Left ventricle myocardium inferior (tissue), 1 donor: ENCODE measurements at regions of chr16 and their contacts with region 1.

Region 1: DNA sequence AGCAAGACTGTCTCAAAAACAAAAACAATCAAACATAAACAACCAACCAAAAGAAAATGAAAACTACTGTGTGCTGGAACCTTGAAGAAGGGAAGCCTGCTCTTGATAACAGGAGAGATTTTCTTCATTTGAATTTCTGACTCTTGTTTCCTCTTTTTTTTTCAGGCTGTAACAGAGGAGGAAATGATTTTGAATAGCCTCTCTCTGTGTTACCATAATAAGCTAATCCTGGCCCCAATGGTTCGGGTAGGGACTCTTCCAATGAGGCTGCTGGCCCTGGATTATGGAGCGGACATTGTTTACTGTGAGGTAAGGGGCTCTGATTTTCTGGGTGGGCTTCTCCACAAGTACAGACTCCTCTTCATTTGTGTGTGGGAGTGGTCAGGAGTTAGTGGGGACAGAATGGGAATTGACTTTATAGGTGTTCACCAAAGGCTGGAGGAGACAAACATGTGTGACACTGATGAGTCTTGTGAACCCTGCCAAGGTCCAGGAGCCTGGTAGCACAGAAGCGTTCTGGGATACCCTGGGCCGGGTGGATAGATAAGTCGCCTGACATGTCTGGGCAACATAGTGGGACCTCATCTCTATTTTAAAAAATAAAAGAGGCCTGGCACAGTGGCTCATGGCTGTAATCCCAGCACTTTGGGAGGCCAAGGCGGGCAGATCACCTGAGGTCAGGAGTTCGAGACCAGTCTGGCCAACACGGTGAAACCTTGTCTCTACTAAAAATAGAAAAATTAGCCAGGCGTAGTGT is 14.9 kb downstream of the DUS2 start:
- DNase-seq: no peak
- H3K4me3 ChIP-seq: no peak overlapping the region
- H3K27ac ChIP-seq: peak overlapping the region; percentile 22
- H3K4me1 ChIP-seq: no peaks in the 10 kb centered on the region
- H3K27me3 ChIP-seq: no peaks in the 10 kb centered on the region
- CTCF ChIP-seq: no peak

Region 2: DNA sequence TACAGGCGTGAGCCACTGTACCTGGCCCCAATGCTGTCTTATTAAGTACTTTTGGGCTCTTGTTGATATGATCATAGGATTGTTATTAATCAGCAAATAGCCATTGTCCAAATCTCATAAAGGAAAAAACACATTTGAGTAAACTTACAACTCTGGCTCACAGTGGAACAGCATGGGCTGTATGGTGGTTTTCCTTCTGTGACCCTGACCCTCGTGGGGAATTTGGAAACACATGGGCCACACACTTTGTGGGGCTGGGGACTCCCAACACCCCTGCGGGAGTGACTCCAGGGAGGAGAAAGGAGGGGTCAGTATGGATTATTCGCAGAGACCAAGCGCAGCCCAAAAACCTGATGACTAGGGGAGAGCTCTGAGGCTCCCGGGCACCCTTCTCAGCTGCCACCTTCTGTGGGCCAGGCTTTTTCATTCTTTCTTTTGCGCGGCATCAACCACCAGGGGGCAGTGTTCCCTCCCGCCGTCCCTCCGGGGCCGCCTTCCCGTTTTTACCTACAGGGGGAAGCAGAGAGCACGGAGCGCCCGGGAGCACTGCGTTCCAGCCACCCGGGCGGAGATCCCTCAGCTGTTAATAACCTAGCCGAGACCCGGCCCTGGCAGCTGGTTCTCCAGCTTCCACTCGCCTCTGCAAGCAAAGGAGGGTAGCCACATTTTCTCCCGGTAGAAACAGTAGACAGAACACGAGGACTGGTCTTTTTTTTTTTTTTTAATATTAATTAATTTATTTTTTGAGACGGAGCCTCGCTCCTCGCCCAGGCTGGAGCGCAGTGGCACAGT is 221.6 kb before region 1 on chr16:
- intact Hi-C with region 1: loop called (anchors 5 kb)
- DNase-seq: peak; percentile 84
- H3K4me3 ChIP-seq: no peak overlapping the region
- H3K27ac ChIP-seq: peak overlapping the region; percentile 50
- H3K4me1 ChIP-seq: peaks cover 4% of the 10 kb centered on the region
- H3K27me3 ChIP-seq: no peaks in the 10 kb centered on the region
- CTCF ChIP-seq: peak; percentile 100

Region 3: DNA sequence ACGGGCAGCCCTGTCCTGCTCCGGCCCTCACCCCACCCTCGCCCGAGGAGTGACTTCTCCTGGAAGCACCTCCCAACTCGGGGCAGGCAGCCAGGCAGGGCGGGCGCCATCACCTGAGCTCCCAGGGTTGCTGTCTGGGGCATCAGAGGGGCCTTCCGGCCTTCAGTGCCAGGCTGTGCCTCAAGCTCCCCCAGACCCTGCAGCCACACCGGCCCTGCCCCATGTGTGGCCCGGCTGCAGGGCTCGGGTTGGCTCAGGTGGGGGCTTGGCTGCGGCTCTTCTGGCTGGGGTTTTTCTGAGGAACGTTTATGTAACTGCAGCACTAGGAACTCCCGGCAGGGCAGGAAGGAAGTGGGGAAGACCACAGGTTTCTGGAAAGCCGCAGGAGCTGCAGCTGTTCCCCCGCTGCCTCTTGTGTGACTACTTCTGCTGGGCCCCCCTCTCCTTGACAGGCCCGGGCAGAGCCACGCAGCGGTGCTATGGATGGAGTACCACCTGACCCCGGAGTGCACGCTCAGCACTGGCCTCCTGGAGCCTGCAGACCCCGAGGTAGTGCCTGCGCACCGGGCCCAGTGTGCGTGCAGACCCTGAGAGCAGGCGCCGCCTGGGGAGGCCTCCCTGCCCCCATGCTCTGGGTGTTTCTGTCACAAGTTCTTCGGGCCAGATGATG is 318.4 kb after region 1 on chr16:
- intact Hi-C with region 1: no loop called
- DNase-seq: no peak
- H3K4me3 ChIP-seq: no peak overlapping the region
- H3K27ac ChIP-seq: no peak overlapping the region
- H3K4me1 ChIP-seq: no peaks in the 10 kb centered on the region
- H3K27me3 ChIP-seq: no peaks in the 10 kb centered on the region
- CTCF ChIP-seq: no peak